ENCODE measurements at regions of chr17 and their contacts with region 1.

Region 1: DNA sequence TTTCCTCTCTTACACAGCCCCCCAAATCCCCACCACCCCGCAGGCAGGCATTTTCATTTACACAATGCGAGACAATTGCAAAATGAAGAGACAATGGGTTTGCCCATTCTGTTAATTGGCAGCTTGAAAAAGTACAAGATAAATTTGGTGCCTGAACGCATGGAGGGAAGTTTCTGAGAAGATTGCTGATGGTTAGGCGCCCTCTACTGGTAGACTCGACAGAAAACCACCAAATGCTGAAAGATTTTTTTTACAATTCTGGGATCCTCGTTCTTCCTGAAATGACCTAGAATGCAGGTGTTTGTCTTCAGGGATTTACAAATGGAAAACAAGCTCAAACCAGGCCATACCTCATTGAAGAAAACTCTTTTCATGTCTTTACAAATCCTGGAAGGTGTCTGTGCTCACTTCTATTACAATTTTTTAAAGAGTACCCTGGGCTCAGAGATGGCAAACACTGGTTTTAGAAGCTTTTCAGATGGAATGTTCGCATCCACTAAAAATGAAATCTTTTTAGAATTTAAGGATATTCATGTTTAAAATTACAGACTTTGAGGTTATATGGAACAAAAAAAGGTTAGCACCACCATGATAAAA is 338.5 kb downstream of the PMP22 start:
- DNase-seq: peak; percentile 51
- H3K4me3 ChIP-seq: no peak overlapping the region
- H3K27ac ChIP-seq: no peak overlapping the region
- H3K27me3 ChIP-seq: no peaks in the 10 kb centered on the region
- CTCF ChIP-seq: peak; percentile 83

Region 2: DNA sequence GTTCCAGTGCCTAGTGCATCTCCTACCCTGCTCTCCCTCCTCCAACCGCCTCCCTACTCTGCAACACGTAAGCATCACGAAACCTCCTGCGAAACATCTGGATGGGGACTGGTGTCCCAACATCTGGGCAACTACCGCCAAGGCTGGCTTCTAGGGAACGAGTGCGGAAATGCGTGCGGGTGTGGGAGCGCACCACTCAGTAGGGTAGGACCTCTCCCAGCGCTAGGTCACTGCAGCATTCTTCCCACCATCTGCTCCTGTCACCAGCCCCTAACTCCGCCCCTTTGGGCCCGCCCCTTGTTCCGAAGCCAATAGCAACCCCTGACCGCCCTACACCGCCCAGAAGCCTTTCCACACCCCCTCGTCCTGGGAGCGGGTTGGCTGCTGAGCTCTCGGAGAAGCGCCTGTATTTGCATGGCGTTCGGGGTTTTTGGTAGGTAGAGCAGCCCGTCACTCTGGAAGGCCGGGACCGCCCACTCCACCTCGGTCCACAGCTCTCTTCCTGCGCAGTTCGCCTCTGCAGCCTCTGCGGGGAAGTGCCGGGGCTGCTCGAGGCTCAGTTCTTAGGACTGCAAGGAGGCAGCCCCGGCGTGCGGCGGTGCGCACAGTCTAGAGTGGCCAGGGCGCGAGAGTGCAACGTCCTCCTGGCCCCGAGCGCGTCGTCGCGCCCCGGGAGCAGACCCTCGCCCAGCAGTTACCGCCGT is 625.9 kb before region 1 on chr17 and contains the start of gene HS3ST3B1:
- CTCF ChIA-PET with region 1: interaction called, 17 read pairs
- POLR2A ChIA-PET with region 1: no interaction called
- DNase-seq: peak; percentile 100
- H3K4me3 ChIP-seq: peak within 1 kb of the TSS; percentile 94
- H3K27ac ChIP-seq: peak within 1 kb of the TSS; percentile 81
- H3K27me3 ChIP-seq: no peaks in the 10 kb centered on the region
- CTCF ChIP-seq: no peak; the same call in 1 of the 2 replicates
- polyA plus RNA-seq, gene HS3ST3B1: 9.6 and 10.3 TPM in 2 replicates

Region 3: DNA sequence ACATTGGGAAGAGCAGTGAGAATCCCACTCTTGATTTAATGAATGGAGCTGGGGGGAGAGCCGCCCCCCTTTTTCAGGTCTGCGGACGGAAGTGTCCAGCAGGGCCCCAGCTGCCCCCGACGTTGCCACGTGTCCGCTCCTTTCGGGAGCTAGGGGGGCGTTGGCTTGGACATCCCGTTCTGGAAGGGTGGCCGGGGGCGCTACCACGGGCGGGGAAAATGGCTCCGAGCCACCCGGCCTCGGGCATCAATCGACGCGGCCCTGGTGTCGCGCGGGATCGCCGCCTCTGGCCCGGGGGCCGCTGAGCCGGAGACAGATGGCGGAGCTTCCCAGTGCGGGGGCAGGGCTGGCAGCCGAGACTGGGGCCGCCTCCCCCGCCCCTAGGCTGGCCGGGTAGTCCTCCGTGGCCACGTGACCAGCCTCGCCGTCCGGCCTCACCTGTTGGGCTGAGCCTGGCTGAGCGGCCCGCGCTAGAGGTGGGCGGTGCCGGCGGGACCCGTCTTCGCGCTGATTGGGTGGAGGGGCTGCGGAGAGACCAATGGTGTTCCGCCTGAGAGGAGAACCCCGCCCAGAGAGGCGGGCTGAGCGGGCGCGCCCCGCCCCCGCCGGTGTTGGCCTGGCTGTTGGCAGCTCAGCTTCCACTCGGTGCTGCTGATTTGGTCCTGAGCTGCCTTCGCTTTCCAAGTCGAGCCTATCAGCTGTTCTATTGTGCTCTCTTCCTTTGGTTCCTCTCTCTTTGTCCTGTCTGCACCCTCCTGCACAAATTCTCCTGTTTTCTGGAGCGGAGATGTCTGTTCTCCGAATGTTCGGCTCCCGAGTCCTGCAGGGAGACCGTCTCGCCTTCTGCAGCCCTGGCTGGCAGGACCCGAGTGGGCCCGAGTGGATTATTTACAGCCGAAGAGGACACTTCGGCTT is 617.4 kb before region 1 on chr17:
- CTCF ChIA-PET with region 1: interaction called, 17 read pairs
- POLR2A ChIA-PET with region 1: interaction called, 3 read pairs
- DNase-seq: peak; percentile 78
- H3K4me3 ChIP-seq: peak overlapping the region; percentile 61
- H3K27ac ChIP-seq: peak overlapping the region; percentile 48
- H3K27me3 ChIP-seq: no peaks in the 10 kb centered on the region
- CTCF ChIP-seq: no peak

Region 4: GRCh38 chr17:14373614-14374259 is 552.9 kb before region 1 on chr17:
- CTCF ChIA-PET with region 1: interaction called, 10 read pairs
- POLR2A ChIA-PET with region 1: no interaction called
- DNase-seq: no peak
- H3K4me3 ChIP-seq: no peak overlapping the region
- H3K27ac ChIP-seq: peak overlapping the region; percentile 47
- H3K27me3 ChIP-seq: no peaks in the 10 kb centered on the region
- CTCF ChIP-seq: 0 out of 2 replicates have a peak, but pooled peaks have one; percentile 2

Region 5: GRCh38 chr17:14510136-14510535 is 416.5 kb before region 1 on chr17:
- CTCF ChIA-PET with region 1: no interaction called
- POLR2A ChIA-PET with region 1: no interaction called
- DNase-seq: no peak
- H3K4me3 ChIP-seq: no peak overlapping the region
- H3K27ac ChIP-seq: no peak overlapping the region
- H3K27me3 ChIP-seq: no peaks in the 10 kb centered on the region
- CTCF ChIP-seq: no peak

Region 6: DNA sequence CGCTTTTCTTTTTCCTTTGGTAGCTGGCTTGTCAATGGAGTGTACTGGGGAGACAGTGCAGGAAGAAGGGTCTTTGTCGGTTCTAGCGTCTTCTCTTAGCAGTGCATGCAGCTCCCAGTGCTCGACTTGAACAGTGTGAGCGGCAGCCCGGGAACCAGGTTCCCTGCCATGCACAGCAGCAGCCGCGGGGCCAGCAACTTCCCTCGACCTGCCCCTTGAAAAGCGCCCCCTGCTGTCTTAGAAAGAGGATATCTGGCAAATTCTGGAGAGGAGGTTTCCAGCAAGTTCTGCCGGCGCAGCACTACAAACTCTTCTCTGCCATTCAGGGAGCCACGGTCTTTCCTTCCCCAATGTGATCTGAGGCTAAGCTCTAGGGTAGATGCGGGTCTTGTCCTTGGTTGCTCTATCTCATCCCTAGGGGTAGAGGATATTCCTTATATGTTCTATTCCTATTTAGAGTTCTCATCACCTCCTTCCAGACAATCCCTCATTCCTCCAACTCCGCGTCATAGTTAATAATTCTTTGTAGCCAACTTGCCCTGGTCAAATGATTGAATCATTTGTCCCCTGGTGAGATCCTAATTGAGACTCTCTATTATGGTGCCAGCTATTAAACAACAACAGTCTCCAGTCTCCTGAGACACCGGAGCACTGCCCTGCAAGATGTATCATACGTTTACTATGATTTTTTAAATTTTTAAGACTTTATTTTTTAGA is 112.8 kb before region 1 on chr17:
- CTCF ChIA-PET with region 1: no interaction called
- POLR2A ChIA-PET with region 1: no interaction called
- DNase-seq: no peak
- H3K4me3 ChIP-seq: no peak overlapping the region
- H3K27ac ChIP-seq: no peak overlapping the region
- H3K27me3 ChIP-seq: no peaks in the 10 kb centered on the region
- CTCF ChIP-seq: no peak

Region 7: DNA sequence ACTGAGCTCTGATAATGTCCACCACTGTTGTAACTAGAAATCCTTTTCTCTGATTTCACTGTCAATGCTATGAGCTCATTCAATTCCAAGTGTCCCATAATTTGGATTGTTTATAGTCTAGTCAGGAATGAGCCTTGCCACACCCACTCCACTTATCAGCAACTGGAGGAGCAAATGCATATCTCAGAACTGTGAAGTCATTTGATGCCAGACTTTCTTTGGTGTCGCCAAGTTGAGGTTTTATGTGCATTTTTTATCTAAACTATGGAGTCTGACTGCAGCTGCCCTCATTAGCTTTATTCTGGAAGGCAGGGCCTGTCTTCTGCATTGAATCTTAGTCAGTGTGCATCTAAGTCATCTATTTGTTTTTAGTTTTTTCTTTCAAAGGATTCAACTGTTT is 22.8 kb before region 1 on chr17:
- CTCF ChIA-PET with region 1: interaction called, 18 read pairs
- POLR2A ChIA-PET with region 1: no interaction called
- DNase-seq: no peak
- H3K4me3 ChIP-seq: no peak overlapping the region
- H3K27ac ChIP-seq: no peak overlapping the region
- H3K27me3 ChIP-seq: no peaks in the 10 kb centered on the region
- CTCF ChIP-seq: no peak

Region 8: GRCh38 chr17:14940108-14940945 is 13.7 kb after region 1 on chr17:
- CTCF ChIA-PET with region 1: interaction called, 37 read pairs
- POLR2A ChIA-PET with region 1: no interaction called
- DNase-seq: no peak
- H3K4me3 ChIP-seq: no peak overlapping the region
- H3K27ac ChIP-seq: no peak overlapping the region
- H3K27me3 ChIP-seq: peaks cover 7% of the 10 kb centered on the region
- CTCF ChIP-seq: no peak

Region 9: GRCh38 chr17:15006421-15007128 is 80.0 kb after region 1 on chr17:
- CTCF ChIA-PET with region 1: no interaction called
- POLR2A ChIA-PET with region 1: no interaction called
- DNase-seq: no peak
- H3K4me3 ChIP-seq: no peak overlapping the region
- H3K27ac ChIP-seq: no peak overlapping the region
- H3K27me3 ChIP-seq: peaks cover 6% of the 10 kb centered on the region
- CTCF ChIP-seq: no peak

Measured in AG04450 (cell line).